Heart left ventricle (tissue), 16 donors: ENCODE measurements at regions of chr11 and their contacts with region 1.

Region 1: DNA sequence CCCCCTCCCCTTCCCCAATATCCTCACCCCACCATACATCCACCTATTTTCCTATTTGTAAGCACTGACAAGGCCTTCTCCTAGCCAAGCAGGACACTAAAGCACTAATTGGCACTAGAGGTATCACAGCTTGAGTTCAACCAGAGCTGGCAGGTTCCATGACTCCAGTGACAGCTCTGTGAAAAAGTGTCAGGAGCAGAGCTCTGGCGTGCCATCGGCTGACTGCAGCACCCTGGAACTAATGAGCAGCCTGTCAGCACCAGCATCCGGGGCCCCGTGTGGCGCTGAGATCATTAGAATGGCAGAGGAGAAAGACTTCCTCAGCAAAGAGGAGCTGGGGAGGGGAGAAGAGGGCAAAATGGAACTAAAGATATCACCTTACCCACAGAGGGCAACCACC is 847.4 kb downstream of the NTM start:
- DNase-seq: peak in 2 of 5 donors; percentile 41 to 44
- ATAC-seq: peak; percentile 49 to 80 (median 65)
- H3K4me3 ChIP-seq: no peak overlapping the region
- H3K27ac ChIP-seq: no peak overlapping the region
- H3K4me1 ChIP-seq: peaks cover 0 to 3% (median 0%) of the 10 kb centered on the region in 12 donors
- H3K27me3 ChIP-seq: no peaks in the 10 kb centered on the region
- CTCF ChIP-seq: no peak
- POLR2A ChIP-seq: no peak

Region 2: DNA sequence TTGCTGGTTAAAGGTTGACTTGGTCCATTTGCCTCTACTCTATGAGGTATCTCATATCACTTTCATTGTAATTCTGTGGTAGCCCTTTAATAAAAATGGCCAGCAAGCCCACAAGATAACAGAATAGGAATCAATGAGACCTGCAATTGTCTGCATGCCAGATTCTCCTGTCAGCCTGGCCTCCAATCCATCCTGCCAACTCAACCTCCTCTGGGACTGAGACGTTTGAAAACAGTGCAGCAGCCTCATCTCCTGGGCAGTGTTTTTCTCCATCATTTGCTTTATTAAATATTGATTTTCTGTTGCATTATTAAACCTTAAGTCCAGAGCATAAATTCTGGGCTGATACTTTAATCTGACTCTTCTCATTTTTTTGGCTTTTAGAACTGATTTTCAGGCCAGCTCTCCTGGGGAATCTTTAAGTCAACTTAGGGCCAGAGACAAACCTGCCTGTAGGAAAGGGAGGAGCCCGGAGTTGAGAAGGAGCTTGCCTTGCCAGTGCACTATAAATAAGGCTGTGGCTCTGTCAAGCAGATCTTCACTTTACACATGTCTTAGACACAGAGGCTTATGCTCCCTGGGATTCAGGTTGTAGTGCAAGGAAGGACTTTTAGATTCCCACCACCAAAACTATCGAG is 49.4 kb before region 1 on chr11:
- intact Hi-C with region 1: loop called in 1 of 10 experiments (anchors 5 kb)
- DNase-seq: no peak
- ATAC-seq: no peak
- H3K4me3 ChIP-seq: no peak overlapping the region
- H3K27ac ChIP-seq: no peak overlapping the region
- H3K4me1 ChIP-seq: no peaks in the 10 kb centered on the region
- H3K27me3 ChIP-seq: no peaks in the 10 kb centered on the region
- CTCF ChIP-seq: no peak
- POLR2A ChIP-seq: no peak